ENCODE measurements at regions of chr3 and their contacts with region 1.

Region 1: DNA sequence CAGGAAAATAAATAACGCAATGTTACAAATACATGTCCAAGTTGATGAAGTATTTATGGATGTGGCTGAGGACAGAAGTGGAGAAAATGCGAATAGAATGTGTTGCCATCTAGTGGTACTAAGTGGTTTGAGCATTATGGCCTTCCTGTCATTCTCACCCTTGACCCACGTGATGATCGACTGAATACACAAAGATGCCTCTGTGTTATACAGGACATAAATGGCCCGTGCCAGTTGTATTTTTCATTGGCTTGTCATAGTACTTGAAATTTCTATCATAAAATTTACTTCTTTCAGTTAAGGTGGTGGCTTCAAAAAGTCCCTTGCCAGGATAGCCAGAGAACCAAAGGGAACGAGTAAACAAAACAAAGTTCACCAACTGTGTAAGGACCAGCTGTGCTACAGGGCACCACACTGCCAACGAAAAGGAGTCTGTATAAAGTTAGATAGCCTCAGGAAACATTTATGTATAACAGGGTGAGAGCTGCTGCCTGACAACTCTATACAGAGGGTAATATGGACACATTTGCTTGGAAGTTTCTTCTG is 103.7 kb downstream of the MYH15 start:
- DNase-seq: peak; percentile 60
- H3K4me3 ChIP-seq: peak overlapping the region in 3 of 4 donors; percentile 8 to 33 (median 12)
- H3K27ac ChIP-seq: peak overlapping the region; percentile 79 to 89 (median 84)
- H3K4me1 ChIP-seq: peaks cover 15 to 69% (median 30%) of the 10 kb centered on the region in 4 donors
- H3K27me3 ChIP-seq: no peaks in the 10 kb centered on the region
- CTCF ChIP-seq: peak; percentile 38 to 94 (median 67)
- EP300 ChIP-seq: peak; percentile 96
- POLR2A ChIP-seq: peak; percentile 84

Region 2: DNA sequence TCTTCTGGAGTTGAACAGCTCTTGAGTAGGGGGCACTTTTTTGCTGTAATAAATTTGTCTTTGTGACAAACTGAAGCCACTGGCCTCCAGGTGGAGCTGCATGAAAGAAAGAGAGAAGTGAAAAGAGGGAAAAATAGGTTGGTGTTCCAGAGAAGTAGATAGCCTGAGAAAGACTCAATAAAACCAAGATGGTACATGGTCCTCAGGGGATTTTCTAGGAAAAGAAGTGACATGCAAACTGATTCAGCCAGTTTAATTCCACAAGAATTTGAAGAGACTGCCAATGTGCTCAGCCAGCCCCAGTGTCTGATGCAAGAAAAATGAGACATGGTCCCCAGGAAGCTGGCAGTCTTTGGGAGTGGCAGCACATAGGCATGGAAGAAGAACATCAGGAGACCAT is 468.6 kb before region 1 on chr3:
- in situ Hi-C with region 1: loop called in 1 of 4 experiments (anchors 10 kb)
- intact Hi-C with region 1: no loop called
- DNase-seq: no peak
- H3K4me3 ChIP-seq: no peak overlapping the region
- H3K27ac ChIP-seq: no peak overlapping the region
- H3K4me1 ChIP-seq: no peaks in the 10 kb centered on the region
- H3K27me3 ChIP-seq: no peaks in the 10 kb centered on the region
- CTCF ChIP-seq: peak; percentile 34 to 55 (median 41)
- EP300 ChIP-seq: no peak
- POLR2A ChIP-seq: no peak